Activated T-helper 1 cell treated with anti-CD3 and anti-CD28 coated beads, Interleukin-12 subunit alpha, Interleukin-12 subunit beta, Interleukin-2, Interleukin-4 antibody, amounts not matched to agents 30 ng/mL and 10 ng/mL and 1 ng/mL, durations not matched to agents 14 hours and 24 hours and 36 hours (primary cell): ENCODE measurements at regions of chr6 and their contacts with region 1.

Region 1: GRCh38 chr6:111837641-111838500 is 35.4 kb downstream of the FYN start:
- DNase-seq: peak; percentile 60
- H3K4me3 Mint-ChIP-seq: peak overlapping the region; percentile 70
- H3K27ac Mint-ChIP-seq: peak overlapping the region; percentile 94
- H3K4me1 Mint-ChIP-seq: peaks cover 61% of the 10 kb centered on the region
- H3K27me3 Mint-ChIP-seq: no peaks in the 10 kb centered on the region

Region 2: GRCh38 chr6:111709615-111710398 is 128.1 kb before region 1 on chr6:
- intact Hi-C with region 1: loop called (anchors 1 kb)
- DNase-seq: peak; percentile 41
- H3K4me3 Mint-ChIP-seq: peak overlapping the region; percentile 45
- H3K27ac Mint-ChIP-seq: peak overlapping the region; percentile 44
- H3K4me1 Mint-ChIP-seq: peaks cover 66% of the 10 kb centered on the region
- H3K27me3 Mint-ChIP-seq: no peaks in the 10 kb centered on the region

Region 3: DNA sequence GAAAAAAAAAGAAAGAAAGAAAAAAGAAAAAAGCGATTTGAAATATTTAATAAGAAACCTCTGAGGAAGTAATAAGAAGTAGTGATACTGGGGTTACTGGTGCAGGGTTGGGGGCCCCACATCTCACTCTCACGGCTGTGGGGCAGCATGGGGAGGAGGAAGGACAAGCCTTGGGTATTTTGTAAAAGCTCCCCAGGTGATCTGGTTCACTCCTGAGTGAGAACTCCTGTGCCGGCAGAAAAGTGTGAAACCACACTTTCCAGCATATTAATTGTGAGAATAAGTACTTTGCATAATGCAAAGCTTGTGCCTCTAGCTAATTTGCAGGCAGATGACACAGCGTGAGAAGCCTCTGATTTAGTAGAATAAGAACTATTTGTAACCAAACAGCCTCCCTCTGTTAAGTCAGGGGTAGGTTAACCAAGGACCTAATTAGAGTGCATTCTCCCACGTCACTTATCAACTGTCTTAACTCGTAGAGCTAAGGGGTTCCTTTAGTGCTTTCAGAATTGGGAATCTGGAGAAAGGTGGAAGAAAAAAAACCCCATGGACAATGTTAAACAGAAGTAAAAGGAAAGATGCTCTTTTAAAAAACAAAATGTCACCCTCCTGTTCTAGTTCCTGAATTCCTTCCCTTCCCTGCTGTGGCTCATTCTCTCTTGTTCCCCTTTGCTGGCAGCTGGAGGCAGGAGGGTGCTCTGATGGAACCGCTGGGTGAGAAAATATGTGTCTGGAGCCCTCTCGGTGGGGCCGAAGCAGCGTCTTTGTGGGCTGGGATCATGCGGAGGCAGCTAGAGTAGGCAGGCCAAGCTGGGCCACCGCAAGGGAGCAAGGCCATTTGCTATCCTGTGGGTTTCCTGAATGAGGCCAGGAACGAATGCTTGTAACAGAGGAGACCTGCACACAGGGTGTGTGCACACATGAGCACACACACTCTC is 73.4 kb before region 1 on chr6:
- intact Hi-C with region 1: loop called (anchors 1 kb)
- DNase-seq: peak; percentile 41
- H3K4me3 Mint-ChIP-seq: peak overlapping the region; percentile 74
- H3K27ac Mint-ChIP-seq: peak overlapping the region; percentile 90
- H3K4me1 Mint-ChIP-seq: peaks cover 100% of the 10 kb centered on the region
- H3K27me3 Mint-ChIP-seq: no peaks in the 10 kb centered on the region

Region 4: GRCh38 chr6:111812060-111813038 is 25.5 kb before region 1 on chr6:
- intact Hi-C with region 1: loop called (anchors 1 kb)
- DNase-seq: no peak
- H3K4me3 Mint-ChIP-seq: peak overlapping the region; percentile 32
- H3K27ac Mint-ChIP-seq: peak overlapping the region; percentile 95
- H3K4me1 Mint-ChIP-seq: peaks cover 74% of the 10 kb centered on the region
- H3K27me3 Mint-ChIP-seq: no peaks in the 10 kb centered on the region

Region 5: GRCh38 chr6:111861431-111861885 is 23.6 kb after region 1 on chr6:
- intact Hi-C with region 1: loop called (anchors 1 kb)
- DNase-seq: no peak
- H3K4me3 Mint-ChIP-seq: no peak overlapping the region
- H3K27ac Mint-ChIP-seq: peak overlapping the region; percentile 32
- H3K4me1 Mint-ChIP-seq: peaks cover 97% of the 10 kb centered on the region
- H3K27me3 Mint-ChIP-seq: no peaks in the 10 kb centered on the region

Region 6: GRCh38 chr6:111997078-111997852 is 159.4 kb after region 1 on chr6:
- intact Hi-C with region 1: loop called (anchors 1 kb)
- DNase-seq: peak; percentile 68
- H3K4me3 Mint-ChIP-seq: peak overlapping the region; percentile 45
- H3K27ac Mint-ChIP-seq: peak overlapping the region; percentile 46
- H3K4me1 Mint-ChIP-seq: peaks cover 46% of the 10 kb centered on the region
- H3K27me3 Mint-ChIP-seq: no peaks in the 10 kb centered on the region

Region 7: DNA sequence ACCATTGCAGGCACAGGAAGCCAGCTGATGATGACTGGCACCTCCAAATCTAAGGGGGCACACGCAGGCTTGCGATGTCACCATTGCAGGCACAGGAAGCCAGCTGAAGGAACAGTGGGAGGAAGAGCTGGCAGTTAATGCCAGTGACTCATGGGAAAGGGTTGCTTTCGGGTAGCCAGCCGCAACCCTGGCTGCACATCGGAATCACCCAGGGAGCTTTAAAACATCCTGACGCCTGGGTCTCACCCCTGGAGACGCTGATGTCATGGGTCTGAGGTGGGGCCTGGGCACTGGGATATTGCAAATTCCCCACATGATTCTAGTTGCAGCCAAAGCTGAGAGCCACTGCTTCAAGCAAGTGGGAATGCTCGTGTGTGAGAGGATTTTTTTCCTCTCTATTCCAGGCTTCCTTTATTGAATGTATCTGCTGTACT is 199.9 kb after region 1 on chr6:
- intact Hi-C with region 1: loop called (anchors 1 kb)
- DNase-seq: no peak
- H3K4me3 Mint-ChIP-seq: no peak overlapping the region
- H3K27ac Mint-ChIP-seq: no peak overlapping the region
- H3K4me1 Mint-ChIP-seq: peaks cover 71% of the 10 kb centered on the region
- H3K27me3 Mint-ChIP-seq: no peaks in the 10 kb centered on the region